Activated B cell treated with CpG ODN at 0.5 μM for 24 hours (primary cell): ENCODE measurements at regions of chr5 and their contacts with region 1.

Region 1: GRCh38 chr5:72816311-72817145 is at the start of gene TNPO1:
- DNase-seq: peak; percentile 94
- ATAC-seq: peak; percentile 79
- H3K4me3 Mint-ChIP-seq: peak within 1 kb of the TSS; percentile 95
- H3K27ac Mint-ChIP-seq: peak within 1 kb of the TSS; percentile 97
- H3K4me1 Mint-ChIP-seq: peaks cover 25% of the 10 kb centered on the region
- H3K27me3 Mint-ChIP-seq: peaks cover 5% of the 10 kb centered on the region
- CTCF ChIP-seq: no peak
- total RNA-seq, gene TNPO1: 89.6 and 109 TPM in 2 replicates

Region 2: DNA sequence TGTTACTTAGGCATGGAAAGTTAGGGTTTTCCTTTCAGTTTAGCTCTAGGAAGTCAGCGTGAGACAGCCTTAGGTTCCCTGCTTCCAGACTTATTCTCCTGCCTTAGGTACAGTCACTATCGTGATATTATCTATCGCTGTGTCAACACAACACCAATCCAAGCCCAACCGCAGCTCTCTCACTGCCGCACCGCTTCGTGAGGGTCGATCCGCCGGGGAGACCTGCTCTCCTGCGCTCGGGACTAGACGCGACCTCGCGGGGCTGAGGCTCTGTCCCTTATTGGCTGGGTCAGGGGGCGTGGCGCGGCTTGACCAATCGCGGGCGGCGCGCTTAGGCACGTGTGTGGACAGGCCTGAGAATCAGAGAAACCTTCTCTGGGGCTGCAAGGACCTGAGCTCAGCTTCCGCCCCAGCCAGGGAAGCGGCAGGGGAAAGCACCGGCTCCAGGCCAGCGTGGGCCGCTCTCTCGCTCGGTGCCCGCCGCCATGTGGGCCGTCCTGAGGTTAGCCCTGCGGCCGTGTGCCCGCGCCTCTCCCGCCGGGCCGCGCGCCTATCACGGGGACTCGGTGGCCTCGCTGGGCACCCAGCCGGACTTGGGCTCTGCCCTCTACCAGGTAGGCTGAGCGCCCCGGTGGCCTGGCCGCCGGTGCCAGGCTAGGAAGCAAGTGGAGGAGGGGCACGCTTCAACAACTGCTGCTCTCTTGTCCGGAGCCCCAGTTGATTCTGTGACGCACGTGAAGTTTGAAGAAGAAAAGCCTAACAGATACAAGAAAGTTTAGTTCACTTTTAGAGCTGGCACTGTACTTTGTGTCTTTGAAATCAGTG is 1229.4 kb before region 1 on chr5 and contains the start of gene MCCC2:
- CTCF ChIA-PET with region 1: no interaction called
- POLR2A ChIA-PET with region 1: no interaction called
- intact Hi-C with region 1: loop called (anchors 10 kb)
- DNase-seq: peak; percentile 93
- ATAC-seq: peak; percentile 98
- H3K4me3 Mint-ChIP-seq: peak within 1 kb of the TSS; percentile 97
- H3K27ac Mint-ChIP-seq: peak within 1 kb of the TSS; percentile 99
- H3K4me1 Mint-ChIP-seq: peaks cover 43% of the 10 kb centered on the region
- H3K27me3 Mint-ChIP-seq: no peaks in the 10 kb centered on the region
- CTCF ChIP-seq: no peak
- total RNA-seq, gene MCCC2: 68.5 and 70.4 TPM in 2 replicates

Region 3: GRCh38 chr5:72319976-72320752 is 496.4 kb before region 1 on chr5 and contains the starts of genes MRPS27 and PTCD2:
- CTCF ChIA-PET with region 1: interaction called, 4 read pairs
- POLR2A ChIA-PET with region 1: interaction called, 7 read pairs
- intact Hi-C with region 1: loop called (anchors 1 kb)
- DNase-seq: peak; percentile 79
- ATAC-seq: peak; percentile 99
- H3K4me3 Mint-ChIP-seq: peak within 1 kb of the TSS; percentile 98
- H3K27ac Mint-ChIP-seq: peak within 1 kb of the TSS; percentile 93
- H3K4me1 Mint-ChIP-seq: peaks cover 25% of the 10 kb centered on the region
- H3K27me3 Mint-ChIP-seq: no peaks in the 10 kb centered on the region
- CTCF ChIP-seq: no peak
- total RNA-seq, gene MRPS27: 69.2 and 71.6 TPM in 2 replicates
- total RNA-seq, gene PTCD2: 6.2 and 8.9 TPM in 2 replicates

Region 4: GRCh38 chr5:72556351-72557166 is 260.0 kb before region 1 on chr5:
- CTCF ChIA-PET with region 1: no interaction called
- POLR2A ChIA-PET with region 1: no interaction called
- intact Hi-C with region 1: loop called (anchors 5 kb)
- DNase-seq: peak; percentile 32
- ATAC-seq: peak; percentile 93
- H3K4me3 Mint-ChIP-seq: peak overlapping the region; percentile 78
- H3K27ac Mint-ChIP-seq: no peak overlapping the region
- H3K4me1 Mint-ChIP-seq: peaks cover 16% of the 10 kb centered on the region
- H3K27me3 Mint-ChIP-seq: peaks cover 29% of the 10 kb centered on the region
- CTCF ChIP-seq: no peak

Region 5: GRCh38 chr5:72842816-72843215 is 26.3 kb after region 1 on chr5:
- CTCF ChIA-PET with region 1: interaction called, 22 read pairs
- POLR2A ChIA-PET with region 1: interaction called, 64 read pairs
- intact Hi-C with region 1: loop called (anchors 1 kb)
- DNase-seq: no peak
- ATAC-seq: no peak
- H3K4me3 Mint-ChIP-seq: no peak overlapping the region
- H3K27ac Mint-ChIP-seq: no peak overlapping the region
- H3K4me1 Mint-ChIP-seq: peaks cover 30% of the 10 kb centered on the region
- H3K27me3 Mint-ChIP-seq: no peaks in the 10 kb centered on the region
- CTCF ChIP-seq: no peak

Region 6: GRCh38 chr5:72955768-72956323 is 139.3 kb after region 1 on chr5 and contains the start of gene FCHO2:
- CTCF ChIA-PET with region 1: no interaction called
- POLR2A ChIA-PET with region 1: no interaction called
- intact Hi-C with region 1: loop called (anchors 1 kb)
- DNase-seq: peak; percentile 96
- ATAC-seq: peak; percentile 96
- H3K4me3 Mint-ChIP-seq: peak within 1 kb of the TSS; percentile 92
- H3K27ac Mint-ChIP-seq: peak within 1 kb of the TSS; percentile 76
- H3K4me1 Mint-ChIP-seq: peaks cover 14% of the 10 kb centered on the region
- H3K27me3 Mint-ChIP-seq: peaks cover 22% of the 10 kb centered on the region
- CTCF ChIP-seq: no peak
- total RNA-seq, gene FCHO2: 3.2 and 5.3 TPM in 2 replicates

Region 7: DNA sequence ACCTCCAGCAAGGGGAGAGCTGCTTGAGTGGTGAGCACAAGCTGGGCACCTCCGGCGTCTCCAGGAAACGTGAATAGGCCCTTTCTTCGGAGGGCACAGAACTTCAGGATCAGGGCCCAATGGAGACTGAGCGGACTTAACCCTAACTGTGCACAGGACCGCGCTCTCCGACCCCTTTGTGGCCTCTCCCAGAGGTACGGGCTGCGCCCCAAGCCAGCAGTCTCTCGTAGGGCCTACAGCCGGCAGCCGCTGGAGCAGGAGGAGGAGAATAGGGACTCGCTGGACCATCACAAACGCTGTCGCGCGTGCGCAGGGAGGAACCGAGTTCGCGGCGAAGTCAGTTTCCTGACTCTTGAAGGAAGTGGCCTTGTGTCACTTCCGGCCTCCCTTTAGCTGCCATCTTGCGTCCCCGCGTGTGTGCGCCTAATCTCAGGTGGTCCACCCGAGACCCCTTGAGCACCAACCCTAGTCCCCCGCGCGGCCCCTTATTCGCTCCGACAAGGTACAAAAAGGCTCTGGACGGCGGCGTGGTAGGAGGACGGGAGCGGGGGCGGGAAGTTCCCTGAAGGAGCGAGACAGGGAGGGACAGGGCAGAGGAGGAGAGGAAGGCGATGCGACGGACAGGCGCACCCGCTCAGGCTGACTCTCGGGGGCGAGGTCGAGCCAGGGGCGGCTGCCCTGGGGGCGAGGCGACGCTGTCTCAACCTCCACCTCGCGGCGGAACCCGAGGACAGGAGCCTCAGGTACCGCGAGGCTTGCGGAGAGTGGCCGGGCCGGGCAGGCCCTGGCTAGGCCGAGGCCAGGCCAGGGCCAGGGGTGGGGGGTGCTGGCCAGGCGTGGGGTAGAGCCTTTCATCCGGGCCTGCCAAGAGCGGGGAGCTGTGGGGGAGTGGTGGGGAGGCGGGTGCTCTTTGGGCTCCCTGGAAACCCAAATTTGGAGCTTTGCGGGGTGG is 681.8 kb after region 1 on chr5 and contains the start of gene BTF3:
- CTCF ChIA-PET with region 1: no interaction called
- POLR2A ChIA-PET with region 1: interaction called, 5 read pairs
- intact Hi-C with region 1: loop called (anchors 2 kb)
- DNase-seq: peak; percentile 88
- ATAC-seq: peak; percentile 96
- H3K4me3 Mint-ChIP-seq: peak within 1 kb of the TSS; percentile 97
- H3K27ac Mint-ChIP-seq: peak within 1 kb of the TSS; percentile 97
- H3K4me1 Mint-ChIP-seq: peaks cover 33% of the 10 kb centered on the region
- H3K27me3 Mint-ChIP-seq: peaks cover 4% of the 10 kb centered on the region
- CTCF ChIP-seq: no peak
- total RNA-seq, gene BTF3: 753 and 798 TPM in 2 replicates